Dendritic cell treated with granulocyte-macrophage colony-stimulating factor and Interleukin-4, amounts not matched to agents 40 ng/mL and 50 ng/mL, for 4 days (primary cell): ENCODE measurements at regions of chr19 and their contacts with region 1.

Region 1: DNA sequence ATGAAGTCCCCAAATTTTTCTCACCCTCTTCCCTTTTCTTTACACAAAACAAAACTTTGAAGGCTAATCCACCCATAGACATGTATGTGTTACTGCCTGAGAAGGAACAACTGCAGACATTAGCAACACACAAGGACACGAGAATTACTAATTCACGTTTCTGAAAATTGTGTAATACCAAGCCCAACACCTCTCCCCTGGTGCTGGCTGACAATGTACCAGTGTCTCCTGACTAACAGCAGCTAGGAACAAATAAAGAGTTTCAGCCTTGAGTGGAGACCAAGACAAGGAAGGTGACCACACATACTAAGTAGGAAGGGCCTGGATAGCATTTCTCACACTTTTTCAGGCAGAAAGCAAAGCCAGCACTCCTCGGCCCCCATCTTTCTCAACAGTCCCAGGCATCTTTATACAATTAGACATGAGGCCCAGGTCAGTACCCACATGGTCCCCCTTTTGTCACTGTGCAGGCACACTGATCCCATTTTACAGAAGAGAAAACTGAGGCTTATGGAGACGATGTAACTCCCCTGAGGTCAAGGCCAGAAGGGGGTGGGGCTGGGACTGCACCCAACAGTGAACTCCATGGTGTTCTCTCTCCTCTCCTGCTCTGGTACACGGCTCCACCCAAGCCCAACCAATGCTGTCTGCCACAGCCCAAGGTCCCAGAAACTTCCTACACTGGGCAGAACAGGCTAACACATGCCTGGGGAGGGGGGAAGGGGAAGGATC is 8.7 kb downstream of the BRD4 start:
- H3K4me3 Mint-ChIP-seq: peak overlapping the region; percentile 1
- H3K27ac Mint-ChIP-seq: peak overlapping the region; percentile 77
- H3K4me1 Mint-ChIP-seq: peaks cover 86% of the 10 kb centered on the region
- H3K27me3 Mint-ChIP-seq: no peaks in the 10 kb centered on the region

Region 2: DNA sequence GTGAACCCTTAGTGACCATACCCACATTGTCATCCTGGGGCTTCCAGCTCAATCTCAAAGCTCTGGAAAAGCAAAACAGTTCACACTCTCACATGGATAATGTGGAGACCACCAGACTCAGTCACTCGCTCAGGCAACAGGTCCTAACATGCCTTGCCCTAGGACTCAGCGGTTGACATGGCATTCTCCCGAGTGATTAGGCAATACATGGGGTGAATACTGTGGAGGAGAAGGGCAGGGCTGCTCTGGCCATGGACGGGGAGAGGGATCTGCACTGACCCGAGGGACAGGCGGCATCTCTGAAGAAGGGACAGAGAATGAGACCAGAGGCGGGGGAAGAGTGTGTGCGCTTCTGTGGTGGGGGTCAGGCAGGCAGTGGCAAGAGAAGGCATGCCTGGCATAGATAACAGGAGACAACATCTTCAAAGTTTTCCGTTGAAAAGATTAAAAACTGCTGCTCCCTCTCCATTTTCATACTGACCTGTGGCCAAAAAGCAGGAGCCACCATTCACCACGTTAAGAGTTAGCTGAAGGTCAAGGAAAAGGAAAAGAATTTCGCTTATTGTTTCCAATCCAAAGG is 46.9 kb before region 1 on chr19:
- intact Hi-C with region 1: loop called (anchors 10 kb)
- H3K4me3 Mint-ChIP-seq: no peak overlapping the region
- H3K27ac Mint-ChIP-seq: no peak overlapping the region
- H3K4me1 Mint-ChIP-seq: peaks cover 72% of the 10 kb centered on the region
- H3K27me3 Mint-ChIP-seq: no peaks in the 10 kb centered on the region